ENCODE measurements at regions of chr1 and their contacts with region 1.

Region 1: DNA sequence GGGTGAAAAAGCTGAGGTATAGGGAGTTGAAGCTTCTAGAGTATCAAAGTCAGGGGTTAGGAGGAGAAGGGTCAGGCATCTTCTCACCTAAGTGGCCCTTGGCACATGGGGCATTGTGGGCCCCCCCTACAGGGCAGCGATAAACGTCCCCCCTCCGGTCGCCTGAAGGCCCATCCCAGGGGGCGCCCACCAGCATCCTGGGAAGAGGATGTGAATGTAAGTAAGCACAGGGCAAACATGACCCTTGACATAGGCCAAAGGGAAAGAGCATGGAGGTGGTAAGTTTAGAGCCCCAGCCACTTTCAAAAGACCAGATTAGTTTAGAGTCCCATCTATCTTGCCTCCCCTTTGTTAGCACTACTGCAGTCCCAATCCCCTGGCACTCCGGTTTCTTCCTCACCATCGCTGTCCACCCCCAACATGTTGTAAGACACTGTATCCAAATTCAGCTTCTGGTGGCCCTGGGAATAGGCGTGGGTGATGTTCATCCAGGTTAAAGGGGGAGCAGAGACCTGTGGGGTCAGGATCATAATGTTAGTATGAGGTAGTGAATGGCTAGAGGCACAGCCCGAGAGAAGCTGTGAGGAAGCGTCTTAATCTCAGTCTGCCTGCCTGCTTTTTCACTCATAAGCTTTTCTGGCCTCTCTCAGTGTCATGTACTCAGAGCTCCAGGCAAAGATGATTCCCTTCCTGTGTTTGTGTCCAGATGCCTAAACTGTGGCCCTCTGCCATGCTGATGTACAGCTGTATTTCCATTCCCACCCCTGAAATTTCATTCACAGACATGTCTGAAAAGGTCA is 2.7 kb downstream of the ITGA10 start:
- DNase-seq: no peak
- ATAC-seq: no peak
- H3K4me3 ChIP-seq: no peak overlapping the region
- H3K27ac ChIP-seq: no peak overlapping the region
- H3K4me1 ChIP-seq: peaks cover 2% of the 10 kb centered on the region; the same call in 1 of the 2 replicates
- H3K27me3 ChIP-seq: no peaks in the 10 kb centered on the region
- CTCF ChIP-seq: no peak
- EP300 ChIP-seq: no peak
- POLR2A ChIP-seq: no peak
- RAD21 ChIP-seq: no peak

Region 2: GRCh38 chr1:145918144-145918992 is 11.2 kb after region 1 on chr1 and contains the start of gene PEX11B:
- CTCF ChIA-PET with region 1: interaction called, 5 read pairs
- POLR2A ChIA-PET with region 1: no interaction called
- RAD21 ChIA-PET with region 1: no interaction called
- SMC1A ChIA-PET with region 1: interaction called, 4 read pairs
- in situ Hi-C with region 1: no loop called
- intact Hi-C with region 1: loop called (anchors 1 kb)
- DNase-seq: peak; percentile 75
- ATAC-seq: peak; percentile 94
- H3K4me3 ChIP-seq: peak within 1 kb of the TSS; percentile 97
- H3K27ac ChIP-seq: peak within 1 kb of the TSS; percentile 93
- H3K4me1 ChIP-seq: peaks cover 17% of the 10 kb centered on the region
- H3K27me3 ChIP-seq: no peaks in the 10 kb centered on the region
- CTCF ChIP-seq: no peak
- EP300 ChIP-seq: no peak
- POLR2A ChIP-seq: peak; percentile 93
- RAD21 ChIP-seq: no peak
- polyA plus RNA-seq, gene PEX11B: 44.8 to 69.4 TPM

Measured in GM12878 (cell line).